ENCODE measurements at regions of chr12 and their contacts with region 1.

Region 1: GRCh38 chr12:16675438-16675837 is 69.5 kb upstream of the LMO3 start:
- DNase-seq: no peak
- H3K4me3 ChIP-seq: no peak overlapping the region
- H3K27ac ChIP-seq: no peak overlapping the region
- H3K4me1 ChIP-seq: no peaks in the 10 kb centered on the region
- H3K27me3 ChIP-seq: no peaks in the 10 kb centered on the region
- CTCF ChIP-seq: no peak
- POLR2A ChIP-seq: no peak

Region 2: GRCh38 chr12:16392846-16393535 is 282.4 kb before region 1 on chr12:
- intact Hi-C with region 1: loop called (anchors 5 kb)
- DNase-seq: no peak
- H3K4me3 ChIP-seq: no peak overlapping the region
- H3K27ac ChIP-seq: no peak overlapping the region
- H3K4me1 ChIP-seq: no peaks in the 10 kb centered on the region
- H3K27me3 ChIP-seq: no peaks in the 10 kb centered on the region
- CTCF ChIP-seq: no peak
- POLR2A ChIP-seq: no peak

Region 3: DNA sequence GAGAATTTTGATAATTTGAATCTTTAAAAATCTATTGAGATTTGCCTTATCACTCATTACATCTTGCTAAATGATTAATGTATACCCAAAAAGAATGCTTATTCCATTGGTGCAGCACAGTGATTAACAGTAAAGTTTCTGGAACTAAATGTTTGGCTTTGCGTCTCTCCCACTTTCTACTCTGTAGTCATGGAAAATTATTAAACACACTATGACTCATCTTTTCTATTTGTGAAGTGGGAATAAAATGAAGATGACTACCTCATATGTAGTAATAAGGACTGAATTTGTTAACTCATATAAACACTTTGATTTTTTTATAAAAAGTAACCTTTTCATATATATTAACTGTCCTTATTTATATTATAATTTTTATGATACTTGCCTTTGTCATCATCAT is 1296.4 kb after region 1 on chr12:
- intact Hi-C with region 1: no loop called
- DNase-seq: no peak
- H3K4me3 ChIP-seq: no peak overlapping the region
- H3K27ac ChIP-seq: no peak overlapping the region
- H3K4me1 ChIP-seq: no peaks in the 10 kb centered on the region
- H3K27me3 ChIP-seq: no peaks in the 10 kb centered on the region
- CTCF ChIP-seq: no peak
- POLR2A ChIP-seq: no peak

Measured in breast epithelium (tissue), 4 donors.